ENCODE measurements at regions of chr14 and their contacts with region 1.

Region 1: DNA sequence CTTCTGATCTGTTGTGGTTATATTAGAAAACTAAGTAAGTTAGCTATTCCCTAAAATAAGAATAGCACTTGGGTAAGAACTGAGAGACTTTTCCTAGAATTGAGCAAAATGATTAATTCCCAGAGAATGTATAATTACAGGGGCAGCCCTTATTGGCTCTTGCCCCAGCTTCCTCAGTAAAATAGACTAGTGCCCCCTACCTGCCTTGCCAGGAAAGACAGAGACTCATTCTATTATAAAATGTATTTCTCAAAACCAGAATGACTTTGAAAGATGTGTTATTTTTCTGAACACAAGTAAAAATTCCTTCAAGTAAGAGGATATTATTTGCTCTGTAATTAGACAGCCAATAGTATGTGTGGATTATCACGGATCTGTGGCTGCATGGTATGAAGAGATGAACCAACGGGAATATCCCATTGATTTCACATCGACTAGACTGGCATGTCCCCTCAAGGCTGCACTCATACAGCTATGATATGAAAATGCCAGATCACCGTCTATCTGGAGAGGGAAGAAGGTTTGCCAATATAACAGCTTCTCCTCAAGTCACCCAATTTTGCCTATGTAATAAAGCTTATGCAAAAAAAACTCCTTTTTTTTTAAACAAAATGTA is 7.4 kb upstream of the GLRX5 start:
- DNase-seq: peak; percentile 58
- H3K4me3 Mint-ChIP-seq: no peak overlapping the region
- H3K27ac Mint-ChIP-seq: peak overlapping the region; percentile 70
- H3K4me1 Mint-ChIP-seq: peaks cover 82% of the 10 kb centered on the region
- H3K27me3 Mint-ChIP-seq: no peaks in the 10 kb centered on the region

Region 2: GRCh38 chr14:95452176-95452892 is 75.2 kb before region 1 on chr14:
- CTCF ChIA-PET with region 1: interaction called, 26 read pairs
- POLR2A ChIA-PET with region 1: no interaction called
- DNase-seq: no peak
- H3K4me3 Mint-ChIP-seq: no peak overlapping the region
- H3K27ac Mint-ChIP-seq: no peak overlapping the region
- H3K4me1 Mint-ChIP-seq: no peaks in the 10 kb centered on the region
- H3K27me3 Mint-ChIP-seq: no peaks in the 10 kb centered on the region

Region 3: DNA sequence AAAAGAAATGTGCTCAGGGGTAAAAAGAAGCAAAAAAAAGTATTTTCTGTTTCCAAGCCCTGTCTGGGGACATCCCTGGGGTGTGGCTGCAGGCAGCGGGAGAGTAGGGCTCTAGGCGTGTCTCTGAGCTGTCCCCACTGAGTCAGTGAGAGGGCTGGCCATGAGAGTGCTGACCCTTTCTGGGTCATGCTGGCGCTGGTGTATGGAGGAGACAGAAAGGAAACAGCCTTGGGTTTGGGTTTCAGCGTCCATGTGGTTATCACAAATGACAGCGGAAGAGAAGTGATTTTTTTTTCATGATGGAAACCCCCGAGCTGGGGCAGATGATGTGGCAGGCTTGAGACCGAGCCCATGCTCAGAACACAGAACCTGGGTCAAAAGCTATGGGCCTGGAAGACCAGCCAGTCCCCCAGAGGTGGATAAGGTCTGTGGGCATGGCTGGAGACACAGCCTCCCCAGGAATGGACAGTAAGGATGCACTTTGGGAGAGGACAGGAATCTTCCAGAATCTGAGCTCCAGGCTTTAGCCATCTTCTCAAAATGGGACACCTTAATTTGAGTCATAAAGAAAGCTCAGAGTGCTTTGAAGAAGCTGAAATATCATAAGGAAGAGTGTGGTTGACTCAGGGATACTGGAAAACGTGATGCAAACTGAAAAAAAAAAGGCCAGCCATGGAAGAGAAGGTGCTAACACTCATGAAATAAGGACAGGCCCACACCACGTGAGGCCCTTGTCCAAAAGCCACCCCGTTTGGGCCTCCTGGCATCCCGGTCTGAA is 47.2 kb before region 1 on chr14:
- CTCF ChIA-PET with region 1: interaction called, 9 read pairs
- POLR2A ChIA-PET with region 1: interaction called, 12 read pairs
- DNase-seq: peak; percentile 56
- H3K4me3 Mint-ChIP-seq: peak overlapping the region; percentile 3
- H3K27ac Mint-ChIP-seq: peak overlapping the region; percentile 79
- H3K4me1 Mint-ChIP-seq: peaks cover 49% of the 10 kb centered on the region
- H3K27me3 Mint-ChIP-seq: no peaks in the 10 kb centered on the region

Region 4: GRCh38 chr14:95507174-95507573 is 20.3 kb before region 1 on chr14:
- CTCF ChIA-PET with region 1: interaction called, 118 read pairs
- POLR2A ChIA-PET with region 1: interaction called, 99 read pairs
- DNase-seq: no peak
- H3K4me3 Mint-ChIP-seq: no peak overlapping the region
- H3K27ac Mint-ChIP-seq: peak overlapping the region; percentile 67
- H3K4me1 Mint-ChIP-seq: peaks cover 85% of the 10 kb centered on the region
- H3K27me3 Mint-ChIP-seq: no peaks in the 10 kb centered on the region

Region 5: GRCh38 chr14:96077983-96078658 is 550.6 kb after region 1 on chr14:
- CTCF ChIA-PET with region 1: no interaction called
- POLR2A ChIA-PET with region 1: no interaction called
- DNase-seq: no peak
- H3K4me3 Mint-ChIP-seq: no peak overlapping the region
- H3K27ac Mint-ChIP-seq: no peak overlapping the region
- H3K4me1 Mint-ChIP-seq: no peaks in the 10 kb centered on the region
- H3K27me3 Mint-ChIP-seq: peaks cover 12% of the 10 kb centered on the region

Measured in activated CD4-positive, alpha-beta memory T cell treated with anti-CD3 and anti-CD28 coated beads, Interleukin-2, amount 10 ng/mL, durations not matched to agents 7 days and 5 days (primary cell).